ENCODE measurements at regions of chr9 and their contacts with region 1.

Region 1: GRCh38 chr9:100216178-100216787 is 117.2 kb downstream of the INVS start:
- DNase-seq: peak; percentile 66 to 84 (median 74)
- ATAC-seq: peak; percentile 99
- H3K4me3 ChIP-seq: no peak overlapping the region
- H3K27ac ChIP-seq: no peak overlapping the region
- H3K4me1 ChIP-seq: peaks cover 0 to 12% of the 10 kb centered on the region in 2 experiments; a peak in 2 of 5 replicates
- H3K27me3 ChIP-seq: no peaks in the 10 kb centered on the region
- CTCF ChIP-seq: peak; percentile 84 to 88 (median 87)
- EP300 ChIP-seq: no peak
- POLR2A ChIP-seq: no peak
- RAD21 ChIP-seq: peak; percentile 83 to 92

Region 2: GRCh38 chr9:100129772-100130171 is 86.5 kb before region 1 on chr9:
- CTCF ChIA-PET with region 1: no interaction called
- POLR2A ChIA-PET with region 1: no interaction called
- in situ Hi-C with region 1: loop called (anchors 10 kb)
- intact Hi-C with region 1: no loop called
- DNase-seq: no peak
- ATAC-seq: no peak
- H3K4me3 ChIP-seq: no peak overlapping the region
- H3K27ac ChIP-seq: no peak overlapping the region
- H3K4me1 ChIP-seq: peaks cover 0 to 7% of the 10 kb centered on the region in 2 experiments; a peak in 2 of 5 replicates
- H3K27me3 ChIP-seq: no peaks in the 10 kb centered on the region
- CTCF ChIP-seq: no peak
- EP300 ChIP-seq: no peak
- POLR2A ChIP-seq: no peak
- RAD21 ChIP-seq: no peak

Region 3: GRCh38 chr9:100277166-100277979 is 61.1 kb after region 1 on chr9:
- CTCF ChIA-PET with region 1: no interaction called
- POLR2A ChIA-PET with region 1: no interaction called
- in situ Hi-C with region 1: no loop called
- intact Hi-C with region 1: loop called (anchors 10 kb)
- DNase-seq: peak in 1 of 4 experiments; percentile 13
- ATAC-seq: no peak
- H3K4me3 ChIP-seq: no peak overlapping the region
- H3K27ac ChIP-seq: no peak overlapping the region; the same call in 2 of the 3 replicates
- H3K4me1 ChIP-seq: peaks cover 0 to 23% of the 10 kb centered on the region in 2 experiments; a peak in 4 of 5 replicates
- H3K27me3 ChIP-seq: no peaks in the 10 kb centered on the region
- CTCF ChIP-seq: no peak
- EP300 ChIP-seq: no peak
- POLR2A ChIP-seq: no peak
- RAD21 ChIP-seq: no peak